ENCODE measurements at regions of chr3 and their contacts with region 1.

Region 1: GRCh38 chr3:31531992-31532586 is 636 bp upstream of the STT3B start:
- DNase-seq: peak; percentile 97 to 99 (median 98)
- ATAC-seq: peak; percentile 83
- H3K4me3 ChIP-seq: peak overlapping the region; percentile 91
- H3K4me3 Mint-ChIP-seq: peak overlapping the region; percentile 97
- H3K27ac ChIP-seq: peak overlapping the region; percentile 97 to 98
- H3K27ac Mint-ChIP-seq: peak overlapping the region; percentile 96
- H3K4me1 ChIP-seq: peaks cover 14% of the 10 kb centered on the region
- H3K4me1 Mint-ChIP-seq: peaks cover 27% of the 10 kb centered on the region
- H3K27me3 ChIP-seq: no peaks in the 10 kb centered on the region
- H3K27me3 Mint-ChIP-seq: no peaks in the 10 kb centered on the region
- CTCF ChIP-seq: no peak

Region 2: GRCh38 chr3:31227131-31227562 is 304.9 kb before region 1 on chr3:
- CTCF ChIA-PET with region 1: no interaction called
- POLR2A ChIA-PET with region 1: interaction called, 102 read pairs
- intact Hi-C with region 1: no loop called
- DNase-seq: peak in 3 of 14 experiments; percentile 74 to 87 (median 79)
- ATAC-seq: peak; percentile 74
- H3K4me3 ChIP-seq: no peak overlapping the region
- H3K4me3 Mint-ChIP-seq: peak overlapping the region; percentile 69
- H3K27ac ChIP-seq: peak overlapping the region; percentile 38 to 78
- H3K27ac Mint-ChIP-seq: peak overlapping the region; percentile 85
- H3K4me1 ChIP-seq: peaks cover 97% of the 10 kb centered on the region
- H3K4me1 Mint-ChIP-seq: peaks cover 96% of the 10 kb centered on the region
- H3K27me3 ChIP-seq: no peaks in the 10 kb centered on the region
- H3K27me3 Mint-ChIP-seq: no peaks in the 10 kb centered on the region
- CTCF ChIP-seq: no peak

Region 3: GRCh38 chr3:31462050-31462569 is 70.0 kb before region 1 on chr3:
- CTCF ChIA-PET with region 1: interaction called, 13 read pairs
- POLR2A ChIA-PET with region 1: interaction called, 179 read pairs
- intact Hi-C with region 1: loop called (anchors 1 kb)
- DNase-seq: peak in 13 of 14 experiments; percentile 9 to 89 (median 40)
- ATAC-seq: peak; percentile 85
- H3K4me3 ChIP-seq: peak overlapping the region; percentile 30
- H3K4me3 Mint-ChIP-seq: peak overlapping the region; percentile 72
- H3K27ac ChIP-seq: peak overlapping the region; percentile 54 to 74
- H3K27ac Mint-ChIP-seq: peak overlapping the region; percentile 90
- H3K4me1 ChIP-seq: peaks cover 54% of the 10 kb centered on the region
- H3K4me1 Mint-ChIP-seq: peaks cover 74% of the 10 kb centered on the region
- H3K27me3 ChIP-seq: no peaks in the 10 kb centered on the region
- H3K27me3 Mint-ChIP-seq: no peaks in the 10 kb centered on the region
- CTCF ChIP-seq: peak; percentile 42

Region 4: DNA sequence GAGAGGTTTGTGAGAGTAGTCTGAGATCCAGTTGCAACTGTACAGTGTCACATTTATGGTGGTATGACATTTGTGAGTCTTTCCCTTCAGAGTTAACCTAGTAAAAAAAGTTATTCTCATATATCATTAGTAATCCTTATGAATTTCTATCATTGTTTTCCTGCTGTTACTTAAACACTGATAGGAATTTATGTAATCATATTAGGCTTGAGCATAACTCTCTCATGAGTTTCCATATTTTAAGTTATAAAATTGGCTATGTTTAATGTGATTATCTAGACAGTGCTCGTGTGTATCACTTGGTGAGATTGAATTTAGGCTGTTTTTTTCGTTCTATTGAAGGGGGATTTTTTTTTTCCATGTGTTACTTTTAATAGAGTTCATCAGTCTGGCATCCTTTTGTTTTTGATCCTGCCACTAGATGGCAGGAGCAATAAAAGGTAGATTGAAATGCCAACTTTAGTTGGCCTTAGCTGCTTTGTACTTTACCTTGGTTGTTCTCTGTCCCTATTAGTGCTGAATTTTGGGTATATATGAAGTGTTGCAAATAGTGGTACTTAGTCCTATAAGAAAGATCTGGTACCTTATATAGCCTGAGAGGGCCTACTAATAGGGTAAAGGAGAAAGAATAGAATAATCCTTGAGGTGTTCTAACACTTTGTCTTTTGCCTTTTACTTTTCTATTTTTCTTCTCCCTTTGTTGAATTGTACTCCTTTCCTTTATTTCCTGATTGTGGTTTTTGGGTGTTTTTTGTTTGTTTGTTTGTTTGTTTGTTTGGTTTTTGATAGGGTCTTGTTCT is 18.6 kb after region 1 on chr3:
- CTCF ChIA-PET with region 1: interaction called, 15 read pairs
- POLR2A ChIA-PET with region 1: interaction called, 52 read pairs
- intact Hi-C with region 1: loop called (anchors 2 kb)
- DNase-seq: peak in 3 of 14 experiments; percentile 52 to 70 (median 67)
- ATAC-seq: peak; percentile 70
- H3K4me3 ChIP-seq: no peak overlapping the region
- H3K4me3 Mint-ChIP-seq: peak overlapping the region; percentile 38
- H3K27ac ChIP-seq: no peak overlapping the region
- H3K27ac Mint-ChIP-seq: peak overlapping the region; percentile 40
- H3K4me1 ChIP-seq: peaks cover 18% of the 10 kb centered on the region
- H3K4me1 Mint-ChIP-seq: peaks cover 94% of the 10 kb centered on the region
- H3K27me3 ChIP-seq: no peaks in the 10 kb centered on the region
- H3K27me3 Mint-ChIP-seq: no peaks in the 10 kb centered on the region
- CTCF ChIP-seq: peak; percentile 86

Region 5: GRCh38 chr3:31635545-31635944 is 103.5 kb after region 1 on chr3:
- CTCF ChIA-PET with region 1: no interaction called
- POLR2A ChIA-PET with region 1: interaction called, 23 read pairs
- intact Hi-C with region 1: no loop called
- DNase-seq: peak in 1 of 14 experiments; percentile 6
- ATAC-seq: no peak
- H3K4me3 ChIP-seq: no peak overlapping the region
- H3K4me3 Mint-ChIP-seq: peak overlapping the region; percentile 46
- H3K27ac ChIP-seq: peak overlapping the region; percentile 5 to 18
- H3K27ac Mint-ChIP-seq: peak overlapping the region; percentile 55
- H3K4me1 ChIP-seq: peaks cover 3% of the 10 kb centered on the region
- H3K4me1 Mint-ChIP-seq: peaks cover 57% of the 10 kb centered on the region
- H3K27me3 ChIP-seq: no peaks in the 10 kb centered on the region
- H3K27me3 Mint-ChIP-seq: no peaks in the 10 kb centered on the region
- CTCF ChIP-seq: no peak

Region 6: GRCh38 chr3:32684800-32685542 is 1152.9 kb after region 1 on chr3 and contains the start of gene CNOT10:
- CTCF ChIA-PET with region 1: no interaction called
- POLR2A ChIA-PET with region 1: no interaction called
- intact Hi-C with region 1: loop called in 1 of 2 experiments (anchors 10 kb)
- DNase-seq: peak; percentile 91 to 98 (median 94)
- ATAC-seq: peak; percentile 87
- H3K4me3 ChIP-seq: peak within 1 kb of the TSS; percentile 92
- H3K4me3 Mint-ChIP-seq: peak within 1 kb of the TSS; percentile 87
- H3K27ac ChIP-seq: peak within 1 kb of the TSS; percentile 74 to 82
- H3K27ac Mint-ChIP-seq: peak within 1 kb of the TSS; percentile 97
- H3K4me1 ChIP-seq: peaks cover 15% of the 10 kb centered on the region
- H3K4me1 Mint-ChIP-seq: peaks cover 41% of the 10 kb centered on the region
- H3K27me3 ChIP-seq: no peaks in the 10 kb centered on the region
- H3K27me3 Mint-ChIP-seq: no peaks in the 10 kb centered on the region
- CTCF ChIP-seq: no peak
- total RNA-seq, gene CNOT10: 31.3 to 42.0 TPM